Endothelial cell of umbilical vein (primary cell): ENCODE measurements at regions of chr19 and their contacts with region 1.

Region 1: DNA sequence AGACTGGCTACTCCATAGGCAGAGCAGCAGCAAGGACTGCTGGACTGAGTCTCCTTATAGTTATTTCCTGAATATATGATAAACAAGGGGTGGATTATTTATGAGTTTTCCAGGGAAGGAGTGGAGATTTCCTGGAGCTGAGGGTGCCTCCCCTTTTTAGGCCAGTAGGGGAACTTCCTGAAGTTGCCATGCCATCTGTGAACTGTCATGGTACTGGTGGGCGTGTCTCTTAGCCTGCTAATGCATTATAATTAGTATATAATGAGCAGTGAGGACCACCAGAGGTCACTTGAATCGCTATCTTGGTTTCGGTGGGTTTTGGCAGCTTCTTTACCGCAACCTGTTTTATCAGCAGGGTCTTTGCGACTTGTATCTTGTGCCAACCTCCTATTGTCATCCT is 13.5 kb downstream of the ZSCAN5A start:
- DNase-seq: peak; percentile 37
- H3K4me3 ChIP-seq: no peak overlapping the region
- H3K27ac ChIP-seq: peak overlapping the region; percentile 35
- H3K4me1 ChIP-seq: peaks cover 15% of the 10 kb centered on the region
- H3K27me3 ChIP-seq: no peaks in the 10 kb centered on the region
- CTCF ChIP-seq: peak; percentile 13 to 28
- POLR2A ChIP-seq: no peak

Region 2: DNA sequence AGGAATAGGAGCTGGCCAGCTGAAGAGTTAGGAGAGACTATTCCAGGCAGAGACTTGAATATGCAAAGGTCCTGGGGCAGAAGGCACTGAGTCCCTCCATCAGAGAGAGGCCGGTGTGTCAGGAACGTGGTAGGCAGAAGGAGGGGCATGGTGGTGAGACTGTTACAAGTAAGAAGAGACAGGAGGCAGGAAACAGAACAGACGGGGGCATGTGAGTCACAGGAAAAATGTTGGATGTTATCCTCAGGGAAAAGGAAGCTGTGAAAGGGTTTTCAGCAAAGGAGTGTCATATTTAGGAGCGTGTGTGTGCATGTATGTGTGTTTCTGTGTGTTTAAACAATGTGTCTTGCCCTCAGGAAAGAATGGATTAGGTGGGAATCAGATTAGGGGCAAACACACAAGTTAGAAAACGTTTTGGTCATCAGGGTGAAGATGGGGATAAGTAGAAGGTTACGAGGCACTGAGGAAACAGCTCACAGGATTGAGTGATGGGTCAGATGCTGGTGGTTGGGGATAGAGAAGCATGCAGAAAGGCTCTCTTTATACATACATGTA is 27.5 kb before region 1 on chr19:
- CTCF ChIA-PET with region 1: interaction called, 3 read pairs
- POLR2A ChIA-PET with region 1: no interaction called
- dilution Hi-C with region 1: no loop called
- intact Hi-C with region 1: loop called (anchors 1 kb)
- DNase-seq: peak; percentile 80
- H3K4me3 ChIP-seq: no peak overlapping the region
- H3K27ac ChIP-seq: peak overlapping the region; percentile 64
- H3K4me1 ChIP-seq: peaks cover 27% of the 10 kb centered on the region
- H3K27me3 ChIP-seq: no peaks in the 10 kb centered on the region
- CTCF ChIP-seq: no peak
- POLR2A ChIP-seq: no peak